ENCODE measurements at regions of chr19 and their contacts with region 1.

Region 1: DNA sequence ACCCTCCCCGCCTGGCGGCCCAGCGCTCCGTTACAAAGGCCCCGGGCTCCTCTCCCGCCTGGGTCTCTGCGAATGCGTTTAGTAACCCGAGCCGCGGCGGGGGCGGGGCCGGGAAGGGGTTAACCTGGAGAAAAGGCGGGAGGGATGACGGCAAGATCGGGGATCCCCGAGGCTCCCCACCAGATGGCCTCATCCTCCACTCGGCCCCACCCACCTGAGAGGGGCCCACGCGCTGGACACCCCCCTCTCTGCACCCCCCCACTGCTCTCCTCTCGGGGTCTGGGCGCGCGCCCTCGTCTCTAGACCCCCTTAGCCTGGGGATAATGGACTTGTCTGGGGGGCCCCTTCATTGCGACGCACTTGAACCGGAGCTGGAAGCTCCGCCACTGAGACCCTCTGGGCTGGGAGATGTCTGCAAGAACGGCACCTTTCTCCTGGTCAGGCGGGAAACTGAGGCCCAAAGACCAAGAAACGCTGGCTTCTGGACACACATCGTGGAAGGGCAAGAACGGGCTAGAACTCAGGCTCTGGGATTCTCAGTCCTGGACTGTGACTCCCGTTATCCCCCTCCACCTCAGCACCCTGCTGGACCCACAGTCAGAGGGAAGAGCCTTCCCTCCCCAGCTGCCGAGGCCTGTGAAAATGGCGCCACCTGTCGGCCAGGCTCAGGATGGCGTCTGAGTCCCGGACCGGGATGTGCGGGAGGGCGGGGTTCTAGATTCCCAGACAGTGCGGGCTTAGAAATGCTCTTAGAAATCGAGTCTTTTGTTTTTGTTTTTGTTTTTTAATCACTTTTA is 2.9 kb upstream of the LTBP4 start:
- DNase-seq: peak; percentile 83 to 92 (median 89)
- H3K4me3 ChIP-seq: no peak overlapping the region
- H3K27ac ChIP-seq: no peak overlapping the region
- H3K4me1 ChIP-seq: peaks cover 14 to 45% of the 10 kb centered on the region in 2 donors
- H3K27me3 ChIP-seq: peaks cover 15% of the 10 kb centered on the region
- CTCF ChIP-seq: peak; percentile 94 to 97 (median 95)
- POLR2A ChIP-seq: no peak

Region 2: DNA sequence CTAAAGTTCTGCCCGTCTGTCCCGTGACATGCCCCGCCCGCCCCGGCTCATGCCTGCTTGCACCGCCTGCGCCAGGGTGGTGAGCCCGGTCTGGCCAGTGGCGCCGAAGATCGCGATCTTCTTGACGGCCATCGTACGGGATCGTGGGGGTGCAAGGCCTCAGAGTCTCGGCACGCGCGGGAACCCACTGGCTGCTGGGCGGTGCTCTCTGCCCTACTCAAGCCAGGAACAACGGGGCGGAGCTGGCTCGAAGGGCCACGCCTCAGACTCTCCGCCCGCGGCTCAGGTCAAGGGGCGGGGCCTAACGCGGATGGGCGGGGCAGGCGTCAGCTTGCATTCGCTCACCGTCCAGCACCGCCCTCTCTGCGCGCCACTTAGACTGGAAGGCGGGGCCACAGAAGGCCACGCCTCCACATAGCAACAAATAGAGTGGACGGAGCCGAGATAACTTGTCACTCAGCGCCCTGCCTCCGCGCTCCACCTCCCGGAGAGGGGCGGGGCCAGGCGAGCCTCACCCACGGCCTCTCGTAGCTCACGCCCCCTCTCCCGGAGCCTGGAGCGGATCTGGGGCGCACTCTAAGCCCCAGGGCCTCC is 132.7 kb before region 1 on chr19 and contains the start of gene BLVRB:
- intact Hi-C with region 1: loop called in 1 of 2 experiments (anchors 10 kb)
- DNase-seq: peak; percentile 99 to 100 (median 100)
- H3K4me3 ChIP-seq: peak within 1 kb of the TSS; percentile 54 to 84 (median 70)
- H3K27ac ChIP-seq: peak within 1 kb of the TSS; percentile 86 to 97 (median 92)
- H3K4me1 ChIP-seq: peaks cover 25 to 29% of the 10 kb centered on the region in 2 donors
- H3K27me3 ChIP-seq: no peaks in the 10 kb centered on the region
- CTCF ChIP-seq: peak in 1 of 6 experiments; percentile 22
- POLR2A ChIP-seq: peak; percentile 44 to 94
- total RNA-seq, gene BLVRB: 85.8 to 303 (median 122) TPM

Region 3: GRCh38 chr19:40530091-40530901 is 68.0 kb before region 1 on chr19:
- intact Hi-C with region 1: loop called in 1 of 2 experiments (anchors 5 kb)
- DNase-seq: peak in 4 of 7 donors; percentile 21 to 57 (median 30)
- H3K4me3 ChIP-seq: peak overlapping the region in 1 of 4 donors; percentile 45
- H3K27ac ChIP-seq: peak overlapping the region in 1 of 5 donors; percentile 74
- H3K4me1 ChIP-seq: peaks cover 0 to 8% of the 10 kb centered on the region in 2 donors
- H3K27me3 ChIP-seq: no peaks in the 10 kb centered on the region
- CTCF ChIP-seq: peak in 2 of 6 experiments; percentile 10 to 22
- POLR2A ChIP-seq: no peak

Measured in adrenal gland (tissue), 19 donors.